Cardiac septum (tissue), 1 donor: ENCODE measurements at regions of chr16 and their contacts with region 1.

Region 1: GRCh38 chr16:87062569-87063442 is 254.4 kb downstream of the C16orf95 start:
- DNase-seq: peak; percentile 50

Region 2: DNA sequence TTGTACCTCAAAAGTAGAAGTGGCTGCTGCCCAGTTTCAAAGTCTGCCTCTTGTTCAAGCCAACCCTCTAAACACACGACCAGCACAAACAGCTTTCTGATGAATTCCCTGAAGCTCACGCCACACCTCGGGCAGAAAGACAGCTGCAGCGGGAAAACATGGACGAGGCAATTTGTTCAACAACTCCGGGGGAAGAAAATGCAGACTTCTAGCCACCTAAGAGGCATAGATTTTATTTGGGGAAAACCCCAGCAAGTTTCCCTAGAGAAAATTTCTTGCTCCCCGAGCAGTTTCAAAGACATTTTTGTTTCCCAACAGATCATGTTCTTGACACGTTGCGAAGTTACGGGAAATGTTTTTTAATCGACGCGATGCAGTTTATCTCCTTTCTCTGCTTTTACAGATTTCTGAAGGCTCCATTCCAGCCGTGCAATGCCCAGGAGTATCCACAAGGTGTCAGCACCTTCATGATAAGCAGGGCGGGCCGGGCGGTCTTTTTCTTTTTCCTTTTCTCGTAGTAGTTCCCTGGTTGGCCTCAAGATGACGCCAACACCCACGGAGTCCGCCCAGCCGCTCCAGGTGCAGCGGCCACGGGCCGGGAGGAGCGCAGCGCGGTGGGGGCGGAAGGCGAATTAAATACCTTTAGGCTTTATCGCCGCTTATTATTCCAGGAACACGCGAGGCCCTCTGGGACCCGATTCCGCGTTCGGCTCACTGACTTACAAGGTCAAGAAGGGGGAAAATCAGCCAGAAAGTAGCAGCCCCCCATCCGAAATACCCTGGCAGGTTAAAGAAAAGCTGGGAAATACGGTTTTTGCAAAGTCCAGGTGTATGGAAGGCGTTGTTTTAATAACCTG is 499.1 kb before region 1 on chr16:
- intact Hi-C with region 1: loop called (anchors 2 kb)
- DNase-seq: peak; percentile 92

Region 3: DNA sequence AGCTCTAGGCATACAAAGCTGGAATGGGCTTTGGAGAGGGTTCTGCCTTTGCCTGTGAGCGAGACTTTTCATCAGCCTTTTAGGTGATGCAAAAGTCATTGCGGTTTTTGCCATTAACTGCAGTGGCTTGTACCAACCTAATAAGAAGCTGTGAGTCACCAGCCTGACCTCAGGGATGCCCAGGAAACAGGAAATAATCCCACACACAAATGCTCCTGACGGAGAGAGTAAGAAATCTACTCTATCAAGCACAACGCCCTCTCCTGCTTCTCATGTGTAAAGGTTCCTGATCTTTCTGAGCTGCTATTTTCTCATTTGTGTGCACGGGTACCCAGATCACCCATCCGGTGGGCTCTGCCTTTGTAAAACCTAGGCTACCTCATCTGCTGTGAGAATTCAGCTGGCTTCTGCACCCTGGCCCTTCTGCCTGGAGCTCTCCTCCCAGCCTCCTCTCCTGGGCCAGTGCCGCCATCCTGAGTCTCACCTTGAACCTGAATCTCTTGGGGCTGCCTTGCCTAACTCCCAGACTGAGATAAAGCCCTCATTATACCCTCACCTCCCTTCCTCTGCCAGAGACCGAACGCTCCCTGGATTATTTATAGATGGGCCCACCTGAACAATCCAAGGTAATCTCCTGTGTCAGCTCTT is 45.3 kb before region 1 on chr16:
- intact Hi-C with region 1: no loop called
- DNase-seq: peak; percentile 63

Region 4: GRCh38 chr16:87161822-87162676 is 99.2 kb after region 1 on chr16:
- intact Hi-C with region 1: no loop called
- DNase-seq: no peak

Region 5: GRCh38 chr16:87278191-87279095 is 215.6 kb after region 1 on chr16:
- intact Hi-C with region 1: loop called (anchors 2 kb)
- DNase-seq: no peak